IMR-90 (cell line): ENCODE measurements at regions of chr12 and their contacts with region 1.

Region 1: DNA sequence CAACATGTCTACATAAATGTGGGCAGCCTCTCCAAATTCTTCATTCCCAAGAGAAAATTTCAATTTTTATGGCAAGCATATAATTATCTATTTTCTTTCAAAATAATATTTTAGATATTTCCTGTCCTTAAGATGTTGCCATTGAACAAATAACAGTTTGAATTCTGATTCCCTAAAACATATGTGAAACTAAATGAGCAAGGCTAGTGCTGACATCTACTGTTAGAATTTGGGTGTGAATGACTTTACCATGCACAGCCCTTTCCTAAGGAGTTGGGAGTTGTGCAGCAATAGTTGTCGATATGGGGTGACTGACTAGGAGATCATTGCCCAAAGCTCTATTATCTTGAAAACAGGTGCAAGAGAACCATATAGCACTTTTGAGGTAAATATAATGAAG is 108.2 kb upstream of the SLC38A4 start:
- DNase-seq: peak; percentile 77
- ATAC-seq: peak; percentile 89
- H3K4me3 ChIP-seq: no peak overlapping the region
- H3K27ac ChIP-seq: no peak overlapping the region
- H3K4me1 ChIP-seq: peaks cover 3% of the 10 kb centered on the region
- H3K27me3 ChIP-seq: no peaks in the 10 kb centered on the region
- CTCF ChIP-seq: peak; percentile 81
- POLR2A ChIP-seq: 0 out of 2 replicates have a peak, but pooled peaks have one; percentile 32
- RAD21 ChIP-seq: peak; percentile 92

Region 2: GRCh38 chr12:46124848-46125619 is 808.9 kb before region 1 on chr12:
- CTCF ChIA-PET with region 1: no interaction called
- POLR2A ChIA-PET with region 1: no interaction called
- dilution Hi-C with region 1: no loop called
- in situ Hi-C with region 1: no loop called
- intact Hi-C with region 1: loop called (anchors 10 kb)
- DNase-seq: peak; percentile 87
- ATAC-seq: peak; percentile 95
- H3K4me3 ChIP-seq: no peak overlapping the region
- H3K27ac ChIP-seq: no peak overlapping the region
- H3K4me1 ChIP-seq: peaks cover 5% of the 10 kb centered on the region
- H3K27me3 ChIP-seq: peaks cover 11% of the 10 kb centered on the region
- CTCF ChIP-seq: peak; percentile 75
- POLR2A ChIP-seq: no peak
- RAD21 ChIP-seq: peak; percentile 68

Region 3: GRCh38 chr12:46342562-46343033 is 591.3 kb before region 1 on chr12:
- CTCF ChIA-PET with region 1: no interaction called
- POLR2A ChIA-PET with region 1: no interaction called
- dilution Hi-C with region 1: no loop called
- in situ Hi-C with region 1: no loop called
- intact Hi-C with region 1: loop called (anchors 1 kb)
- DNase-seq: peak; percentile 63
- ATAC-seq: peak; percentile 91
- H3K4me3 ChIP-seq: no peak overlapping the region
- H3K27ac ChIP-seq: no peak overlapping the region
- H3K4me1 ChIP-seq: peaks cover 3% of the 10 kb centered on the region; the same call in 1 of the 2 replicates
- H3K27me3 ChIP-seq: no peaks in the 10 kb centered on the region
- CTCF ChIP-seq: peak; percentile 53
- POLR2A ChIP-seq: no peak
- RAD21 ChIP-seq: peak; percentile 63

Region 4: GRCh38 chr12:46492471-46493351 is 441.2 kb before region 1 on chr12:
- CTCF ChIA-PET with region 1: interaction called, 4 read pairs
- POLR2A ChIA-PET with region 1: no interaction called
- dilution Hi-C with region 1: no loop called
- in situ Hi-C with region 1: no loop called
- intact Hi-C with region 1: loop called (anchors 10 kb)
- DNase-seq: peak; percentile 97
- ATAC-seq: peak; percentile 65
- H3K4me3 ChIP-seq: no peak overlapping the region
- H3K27ac ChIP-seq: peak overlapping the region; percentile 93; the same call in 1 of the 2 replicates
- H3K4me1 ChIP-seq: peaks cover 27% of the 10 kb centered on the region
- H3K27me3 ChIP-seq: no peaks in the 10 kb centered on the region
- CTCF ChIP-seq: no peak
- POLR2A ChIP-seq: no peak
- RAD21 ChIP-seq: no peak

Region 5: GRCh38 chr12:46661110-46661845 is 272.7 kb before region 1 on chr12:
- CTCF ChIA-PET with region 1: no interaction called
- POLR2A ChIA-PET with region 1: no interaction called
- dilution Hi-C with region 1: no loop called
- in situ Hi-C with region 1: no loop called
- intact Hi-C with region 1: loop called (anchors 2 kb)
- DNase-seq: peak; percentile 95
- ATAC-seq: peak; percentile 76
- H3K4me3 ChIP-seq: peak overlapping the region; percentile 14; the same call in 1 of the 2 replicates
- H3K27ac ChIP-seq: peak overlapping the region; percentile 93
- H3K4me1 ChIP-seq: peaks cover 29% of the 10 kb centered on the region
- H3K27me3 ChIP-seq: no peaks in the 10 kb centered on the region
- CTCF ChIP-seq: peak; percentile 87
- POLR2A ChIP-seq: peak; percentile 32; the same call in 1 of the 2 replicates
- RAD21 ChIP-seq: peak; percentile 84

Region 6: GRCh38 chr12:46770501-46771183 is 163.3 kb before region 1 on chr12:
- CTCF ChIA-PET with region 1: no interaction called
- POLR2A ChIA-PET with region 1: no interaction called
- dilution Hi-C with region 1: no loop called
- in situ Hi-C with region 1: no loop called
- intact Hi-C with region 1: loop called (anchors 5 kb)
- DNase-seq: peak; percentile 59
- ATAC-seq: peak; percentile 68
- H3K4me3 ChIP-seq: no peak overlapping the region
- H3K27ac ChIP-seq: peak overlapping the region; percentile 50; the same call in 1 of the 2 replicates
- H3K4me1 ChIP-seq: peaks cover 17% of the 10 kb centered on the region
- H3K27me3 ChIP-seq: no peaks in the 10 kb centered on the region
- CTCF ChIP-seq: no peak
- POLR2A ChIP-seq: no peak
- RAD21 ChIP-seq: no peak

Region 7: DNA sequence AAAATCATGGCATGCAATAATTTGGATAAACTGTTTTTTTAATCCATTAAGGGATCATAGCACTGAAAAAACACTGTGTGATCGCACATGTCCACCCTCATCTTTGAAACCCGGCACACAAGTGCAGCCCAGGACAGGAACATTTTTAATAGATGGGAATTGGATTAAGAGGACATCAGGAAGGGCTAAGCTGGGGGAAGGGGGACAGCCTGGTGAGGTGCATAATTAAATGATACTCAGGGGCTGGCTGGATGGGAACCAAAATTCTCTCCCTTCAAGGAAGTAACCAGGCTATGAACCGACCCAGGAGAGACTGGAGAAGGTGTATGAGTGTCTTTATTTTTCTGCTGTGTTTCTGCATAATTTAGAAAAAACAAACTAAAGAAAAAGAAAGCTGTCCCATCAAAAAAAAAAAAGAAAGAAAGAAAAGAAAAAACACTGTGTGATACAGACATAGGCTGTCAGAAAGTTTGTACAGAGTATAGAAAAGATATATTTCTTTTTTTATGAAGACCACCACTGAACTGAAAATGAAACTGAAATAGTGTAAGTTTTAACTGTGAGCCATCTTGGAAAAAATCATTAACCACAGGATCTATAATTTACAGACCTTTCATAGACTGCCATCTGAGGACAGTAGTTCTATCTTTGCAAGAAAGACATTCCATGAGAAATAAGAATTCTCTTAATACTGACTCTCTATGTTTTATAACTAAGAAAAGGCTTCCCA is 33.0 kb before region 1 on chr12:
- CTCF ChIA-PET with region 1: no interaction called
- POLR2A ChIA-PET with region 1: no interaction called
- dilution Hi-C with region 1: no loop called
- in situ Hi-C with region 1: no loop called
- intact Hi-C with region 1: no loop called
- DNase-seq: no peak
- ATAC-seq: no peak
- H3K4me3 ChIP-seq: no peak overlapping the region
- H3K27ac ChIP-seq: no peak overlapping the region
- H3K4me1 ChIP-seq: peaks cover 6% of the 10 kb centered on the region
- H3K27me3 ChIP-seq: no peaks in the 10 kb centered on the region
- CTCF ChIP-seq: no peak
- POLR2A ChIP-seq: no peak
- RAD21 ChIP-seq: no peak

Region 8: DNA sequence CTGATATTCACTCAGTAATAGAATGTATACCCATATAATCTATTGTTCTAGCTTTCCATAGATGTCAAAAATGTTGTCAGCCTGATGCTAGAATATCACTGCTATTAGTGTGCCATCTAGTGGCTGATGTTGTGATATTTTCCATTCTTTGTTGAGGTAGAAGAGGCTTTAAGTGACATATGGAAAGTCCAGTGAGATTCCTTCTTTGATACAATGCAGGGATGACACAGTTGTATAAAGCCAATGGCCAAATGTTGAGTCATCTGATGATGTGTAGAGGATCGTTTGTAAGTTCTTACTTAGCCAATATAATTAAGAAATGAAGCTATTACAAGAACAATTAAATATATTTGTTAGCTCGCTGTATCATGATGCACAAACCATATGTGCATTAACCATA is 87.4 kb after region 1 on chr12:
- CTCF ChIA-PET with region 1: interaction called, 7 read pairs
- POLR2A ChIA-PET with region 1: no interaction called
- dilution Hi-C with region 1: no loop called
- in situ Hi-C with region 1: no loop called
- intact Hi-C with region 1: loop called (anchors 5 kb)
- DNase-seq: peak; percentile 95
- ATAC-seq: peak; percentile 76
- H3K4me3 ChIP-seq: no peak overlapping the region
- H3K27ac ChIP-seq: no peak overlapping the region
- H3K4me1 ChIP-seq: peaks cover 10% of the 10 kb centered on the region
- H3K27me3 ChIP-seq: no peaks in the 10 kb centered on the region
- CTCF ChIP-seq: peak; percentile 73
- POLR2A ChIP-seq: peak; percentile 20; the same call in 1 of the 2 replicates
- RAD21 ChIP-seq: peak; percentile 84